ENCODE measurements at regions of chr16 and their contacts with region 1.

Region 1: DNA sequence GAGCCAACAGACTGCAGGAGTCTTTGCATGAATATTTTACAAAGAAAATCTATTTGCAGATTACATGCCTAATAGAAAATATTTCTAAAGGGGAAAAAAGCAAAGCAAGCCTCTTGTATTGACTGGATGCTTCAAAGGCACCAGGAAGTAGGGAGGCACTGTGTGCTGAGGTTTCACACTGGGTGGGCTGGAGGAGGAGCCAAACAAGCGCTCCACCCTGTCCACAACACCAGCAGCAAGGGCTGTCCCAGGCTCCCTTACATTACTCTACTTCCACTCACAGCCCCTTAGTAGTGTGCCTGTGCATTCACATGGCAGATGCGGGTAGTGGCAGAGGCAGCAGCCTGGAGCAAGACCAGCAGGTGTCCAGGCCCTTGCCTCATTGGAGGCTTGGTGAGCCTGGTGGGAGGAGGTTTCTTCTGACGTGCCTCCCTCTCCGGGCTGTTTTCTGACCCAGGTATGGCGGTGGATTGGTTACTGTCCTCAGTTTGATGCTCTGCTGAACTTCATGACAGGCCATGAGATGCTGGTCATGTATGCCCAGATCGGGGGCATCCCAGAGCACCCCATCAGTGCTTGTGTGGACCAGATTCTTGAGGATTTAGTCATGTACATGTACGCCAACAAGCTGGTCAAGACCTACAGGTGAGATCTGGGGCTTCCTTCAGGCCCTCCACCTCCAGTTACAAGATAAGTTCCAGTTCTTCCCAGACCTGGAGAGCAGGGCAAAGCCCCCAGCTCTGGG is 7.0 kb upstream of the CCNF start:
- DNase-seq: no peak
- ATAC-seq: peak; percentile 28
- H3K4me3 ChIP-seq: no peak overlapping the region
- H3K27ac ChIP-seq: no peak overlapping the region
- H3K4me1 ChIP-seq: no peaks in the 10 kb centered on the region
- H3K27me3 ChIP-seq: no peaks in the 10 kb centered on the region
- CTCF ChIP-seq: no peak

Region 2: DNA sequence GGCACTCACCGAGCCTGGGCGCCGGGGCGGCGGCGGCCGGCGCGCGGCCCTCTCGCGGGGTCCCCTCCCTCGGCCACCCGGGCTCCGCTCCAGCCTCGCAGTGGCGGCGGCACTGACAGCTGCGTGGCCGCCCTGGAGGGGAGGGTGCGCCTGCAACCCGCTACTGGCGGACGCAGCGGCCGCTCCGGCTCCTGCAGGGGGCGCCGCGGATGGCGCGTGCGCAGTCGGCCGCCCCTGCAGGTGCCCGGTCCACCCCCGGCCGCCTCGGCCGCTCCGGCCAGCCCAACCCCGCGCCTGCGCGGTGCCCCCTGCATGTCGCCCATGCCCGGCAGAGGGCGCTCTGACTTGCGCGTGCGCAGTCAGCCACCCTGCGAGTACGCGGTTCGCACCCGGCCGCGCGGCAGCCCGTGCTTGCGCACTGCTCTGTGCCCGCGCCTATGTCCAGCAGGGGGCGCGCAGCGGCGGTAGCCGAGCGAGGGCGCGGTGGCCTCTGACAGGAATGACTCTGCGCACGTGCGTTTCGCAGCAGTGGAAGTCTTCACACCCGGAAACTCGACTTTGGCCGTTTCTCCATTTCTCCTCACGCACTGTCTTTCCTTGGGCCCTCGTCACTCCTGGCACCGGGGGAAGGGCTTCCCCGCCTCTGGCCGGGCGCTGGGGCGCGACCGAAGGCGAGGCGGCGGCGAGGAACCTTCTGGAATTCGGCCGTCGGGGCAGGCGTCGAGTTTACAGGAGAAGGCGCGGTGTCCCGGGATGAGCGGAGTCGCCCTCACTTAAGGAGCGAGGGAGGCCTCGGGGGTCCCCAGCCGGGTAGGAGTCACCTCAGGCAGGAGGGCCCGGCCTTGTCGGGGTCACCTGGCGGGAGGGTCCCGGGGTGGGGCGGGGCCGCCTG is 81.5 kb before region 1 on chr16 and contains the start of gene ABCA3:
- CTCF ChIA-PET with region 1: no interaction called
- POLR2A ChIA-PET with region 1: no interaction called
- in situ Hi-C with region 1: no loop called
- intact Hi-C with region 1: loop called (anchors 5 kb)
- DNase-seq: peak; percentile 83
- ATAC-seq: peak; percentile 94
- H3K4me3 ChIP-seq: peak within 1 kb of the TSS; percentile 73 to 79
- H3K27ac ChIP-seq: peak within 1 kb of the TSS; percentile 86
- H3K4me1 ChIP-seq: peaks cover 18% of the 10 kb centered on the region
- H3K27me3 ChIP-seq: no peaks in the 10 kb centered on the region
- CTCF ChIP-seq: peak; percentile 100
- total RNA-seq, gene ABCA3: 58.4 TPM

Region 3: GRCh38 chr16:2450535-2450934 is 28.2 kb after region 1 on chr16:
- CTCF ChIA-PET with region 1: no interaction called
- POLR2A ChIA-PET with region 1: no interaction called
- in situ Hi-C with region 1: no loop called
- intact Hi-C with region 1: no loop called
- DNase-seq: no peak
- ATAC-seq: no peak
- H3K4me3 ChIP-seq: no peak overlapping the region
- H3K27ac ChIP-seq: no peak overlapping the region
- H3K4me1 ChIP-seq: no peaks in the 10 kb centered on the region
- H3K27me3 ChIP-seq: no peaks in the 10 kb centered on the region
- CTCF ChIP-seq: no peak